GM12878 (cell line): ENCODE measurements at regions of chr1 and their contacts with region 1.

Region 1: GRCh38 chr1:182781841-182782586 is 7.6 kb upstream of the NPL start:
- DNase-seq: peak; percentile 51
- ATAC-seq: peak; percentile 88
- H3K4me3 ChIP-seq: no peak overlapping the region
- H3K27ac ChIP-seq: no peak overlapping the region
- H3K4me1 ChIP-seq: peaks cover 5% of the 10 kb centered on the region; the same call in 1 of the 2 replicates
- H3K27me3 ChIP-seq: no peaks in the 10 kb centered on the region
- CTCF ChIP-seq: peak; percentile 83 to 95 (median 89)
- EP300 ChIP-seq: no peak
- POLR2A ChIP-seq: no peak
- RAD21 ChIP-seq: peak; percentile 97

Region 2: DNA sequence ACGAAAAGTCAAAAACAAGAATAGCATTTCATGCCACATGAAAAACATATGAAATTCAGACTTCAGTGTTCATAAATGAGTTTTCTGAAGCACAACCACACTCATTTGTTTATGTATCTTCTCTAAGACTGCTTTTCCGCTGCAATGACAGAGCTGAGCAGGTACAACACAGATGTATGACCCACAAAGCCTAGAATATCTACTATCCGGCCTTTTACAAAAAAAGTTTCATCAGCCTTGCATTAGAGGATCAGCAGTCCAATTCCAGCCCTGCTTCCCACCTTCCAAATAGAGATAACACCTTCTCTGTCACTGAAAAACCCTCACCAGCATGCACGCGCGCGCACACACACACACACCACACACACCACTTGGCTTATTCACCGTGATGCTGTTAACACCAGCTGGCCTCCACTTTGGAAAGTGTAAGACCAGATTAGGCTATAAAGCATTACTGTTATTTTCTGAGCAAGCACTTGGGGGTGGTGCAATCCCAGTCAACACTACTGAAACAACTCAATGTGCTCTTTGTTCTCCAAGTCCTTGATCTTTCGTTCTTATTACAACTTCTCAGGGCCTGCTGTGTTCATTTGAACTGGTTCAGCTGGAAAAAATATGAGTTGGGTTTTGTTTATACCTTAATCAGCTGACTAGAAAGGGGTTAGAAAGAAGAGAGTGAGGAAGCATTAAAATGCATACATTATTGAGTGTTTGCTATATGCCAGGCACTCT is 480.4 kb before region 1 on chr1:
- CTCF ChIA-PET with region 1: no interaction called
- POLR2A ChIA-PET with region 1: no interaction called
- RAD21 ChIA-PET with region 1: no interaction called
- SMC1A ChIA-PET with region 1: no interaction called
- in situ Hi-C with region 1: no loop called
- intact Hi-C with region 1: no loop called
- DNase-seq: no peak
- ATAC-seq: peak; percentile 66
- H3K4me3 ChIP-seq: no peak overlapping the region
- H3K27ac ChIP-seq: no peak overlapping the region
- H3K4me1 ChIP-seq: peaks cover 12% of the 10 kb centered on the region
- H3K27me3 ChIP-seq: no peaks in the 10 kb centered on the region
- CTCF ChIP-seq: peak in 1 of 3 experiments; percentile 30; a peak in 1 of 6 replicates
- EP300 ChIP-seq: no peak
- POLR2A ChIP-seq: no peak
- RAD21 ChIP-seq: peak; percentile 45; the same call in 1 of the 2 replicates

Region 3: DNA sequence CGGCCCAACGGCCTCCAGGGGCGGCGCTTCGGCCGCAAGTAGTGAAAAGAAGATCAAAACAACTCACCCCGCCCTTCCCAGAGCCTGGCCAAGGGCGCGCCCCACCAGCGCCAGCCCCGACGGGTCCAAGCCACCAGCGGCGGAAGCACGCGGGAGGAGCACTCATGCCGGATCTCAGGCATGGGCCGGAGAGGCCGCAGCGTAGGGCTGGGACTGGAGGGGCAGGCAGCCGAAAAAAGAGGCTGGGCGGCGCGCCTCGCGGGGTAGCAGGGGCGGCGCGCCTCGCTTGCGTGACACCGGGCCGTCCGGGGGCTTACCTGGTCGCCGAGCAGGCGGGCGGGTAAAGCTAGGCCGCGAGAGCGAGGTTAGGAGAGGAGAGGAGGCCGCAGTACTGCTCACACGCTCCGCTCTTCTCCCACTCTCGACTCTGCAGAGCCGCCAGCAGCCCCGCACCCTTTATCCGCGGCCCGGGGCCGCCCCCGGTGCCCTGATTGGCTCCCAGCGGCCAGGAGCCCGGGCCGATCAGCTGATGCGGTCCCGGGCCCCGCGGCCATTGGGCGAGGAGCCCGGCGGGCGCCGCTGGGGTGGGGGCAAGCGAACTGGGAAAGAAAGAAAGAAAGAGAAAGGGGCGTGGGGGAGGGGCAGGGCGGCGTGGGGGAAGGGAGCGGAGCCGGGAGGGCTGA is 390.5 kb before region 1 on chr1 and contains the start of gene GLUL:
- CTCF ChIA-PET with region 1: interaction called, 17 read pairs
- POLR2A ChIA-PET with region 1: no interaction called
- RAD21 ChIA-PET with region 1: no interaction called
- SMC1A ChIA-PET with region 1: interaction called, 7 read pairs
- in situ Hi-C with region 1: no loop called
- intact Hi-C with region 1: loop called (anchors 5 kb)
- DNase-seq: no peak
- ATAC-seq: peak; percentile 86
- H3K4me3 ChIP-seq: peak within 1 kb of the TSS; percentile 85
- H3K27ac ChIP-seq: peak within 1 kb of the TSS; percentile 71
- H3K4me1 ChIP-seq: peaks cover 11% of the 10 kb centered on the region
- H3K27me3 ChIP-seq: no peaks in the 10 kb centered on the region
- CTCF ChIP-seq: peak in 1 of 3 experiments; percentile 36; a peak in 1 of 6 replicates
- EP300 ChIP-seq: no peak
- POLR2A ChIP-seq: peak; percentile 98
- RAD21 ChIP-seq: no peak
- polyA plus RNA-seq, gene GLUL: 166 to 392 TPM

Region 4: DNA sequence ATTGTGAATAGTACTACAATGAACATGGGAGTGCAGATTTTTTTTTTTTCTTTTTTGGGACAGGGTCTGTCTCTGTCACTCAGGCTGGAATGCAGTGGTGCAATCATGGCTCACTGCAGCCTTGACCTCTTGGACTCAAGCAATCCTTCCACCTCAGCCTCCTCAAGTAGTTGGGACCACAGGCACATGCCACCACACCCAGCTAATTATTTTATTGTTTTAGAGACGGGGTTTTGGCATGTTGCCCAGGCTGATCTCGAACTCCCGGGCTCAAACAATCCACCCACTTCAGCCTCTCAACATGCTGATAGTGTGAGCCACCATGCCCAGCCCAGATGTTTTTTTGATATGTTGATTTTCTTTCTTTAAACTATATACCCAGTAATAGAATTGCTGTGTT is 274.3 kb before region 1 on chr1:
- CTCF ChIA-PET with region 1: no interaction called
- POLR2A ChIA-PET with region 1: no interaction called
- RAD21 ChIA-PET with region 1: no interaction called
- SMC1A ChIA-PET with region 1: no interaction called
- in situ Hi-C with region 1: no loop called
- intact Hi-C with region 1: no loop called
- DNase-seq: no peak
- ATAC-seq: no peak
- H3K4me3 ChIP-seq: no peak overlapping the region
- H3K27ac ChIP-seq: no peak overlapping the region
- H3K4me1 ChIP-seq: no peaks in the 10 kb centered on the region
- H3K27me3 ChIP-seq: no peaks in the 10 kb centered on the region
- CTCF ChIP-seq: no peak
- EP300 ChIP-seq: no peak
- POLR2A ChIP-seq: no peak
- RAD21 ChIP-seq: no peak

Region 5: GRCh38 chr1:182527680-182528079 is 254.3 kb before region 1 on chr1:
- CTCF ChIA-PET with region 1: no interaction called
- POLR2A ChIA-PET with region 1: no interaction called
- RAD21 ChIA-PET with region 1: no interaction called
- SMC1A ChIA-PET with region 1: no interaction called
- in situ Hi-C with region 1: no loop called
- intact Hi-C with region 1: no loop called
- DNase-seq: no peak
- ATAC-seq: no peak
- H3K4me3 ChIP-seq: no peak overlapping the region
- H3K27ac ChIP-seq: no peak overlapping the region
- H3K4me1 ChIP-seq: no peaks in the 10 kb centered on the region
- H3K27me3 ChIP-seq: no peaks in the 10 kb centered on the region
- CTCF ChIP-seq: no peak
- EP300 ChIP-seq: no peak
- POLR2A ChIP-seq: no peak
- RAD21 ChIP-seq: no peak

Region 6: DNA sequence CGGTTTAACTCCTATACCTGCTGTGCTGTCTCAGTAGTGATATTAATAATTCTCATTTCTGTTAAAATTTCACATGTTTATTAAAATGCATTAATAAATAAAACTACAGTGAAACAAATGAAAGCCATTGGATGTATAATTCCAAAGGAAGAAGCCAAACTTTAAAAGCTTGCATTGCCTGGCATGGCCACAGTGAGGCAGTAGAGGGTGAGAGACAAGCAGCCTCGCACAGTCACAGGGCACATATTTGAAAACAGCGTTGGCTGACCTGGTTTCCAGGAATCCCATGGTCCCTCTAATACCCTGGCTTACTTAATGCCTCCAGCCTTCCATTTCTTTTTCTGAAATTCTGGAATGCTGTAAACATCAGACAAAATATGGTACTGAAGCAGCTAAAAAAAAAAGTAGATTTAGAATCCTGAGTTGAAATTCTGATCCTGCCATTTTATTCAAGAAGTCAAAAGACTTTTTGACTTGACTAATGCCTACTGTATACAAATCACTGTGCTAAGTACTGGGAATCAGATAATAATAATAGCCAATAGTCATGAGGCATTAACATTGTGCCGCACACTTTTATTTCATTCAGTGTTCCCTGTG is 186.3 kb before region 1 on chr1:
- CTCF ChIA-PET with region 1: interaction called, 1,888 read pairs
- POLR2A ChIA-PET with region 1: interaction called, 34 read pairs
- RAD21 ChIA-PET with region 1: interaction called, 946 read pairs
- SMC1A ChIA-PET with region 1: interaction called, 1,145 read pairs
- in situ Hi-C with region 1: loop called (anchors 5 kb)
- intact Hi-C with region 1: loop called (anchors 1 kb)
- DNase-seq: no peak
- ATAC-seq: peak; percentile 56
- H3K4me3 ChIP-seq: no peak overlapping the region
- H3K27ac ChIP-seq: no peak overlapping the region
- H3K4me1 ChIP-seq: peaks cover 4% of the 10 kb centered on the region; the same call in 1 of the 2 replicates
- H3K27me3 ChIP-seq: no peaks in the 10 kb centered on the region
- CTCF ChIP-seq: peak; percentile 87 to 91 (median 88)
- EP300 ChIP-seq: no peak
- POLR2A ChIP-seq: no peak
- RAD21 ChIP-seq: peak; percentile 92

Region 7: GRCh38 chr1:182629499-182630096 is 152.4 kb before region 1 on chr1:
- CTCF ChIA-PET with region 1: interaction called, 14 read pairs
- POLR2A ChIA-PET with region 1: no interaction called
- RAD21 ChIA-PET with region 1: interaction called, 31 read pairs
- SMC1A ChIA-PET with region 1: interaction called, 30 read pairs
- in situ Hi-C with region 1: no loop called
- intact Hi-C with region 1: no loop called
- DNase-seq: no peak
- ATAC-seq: peak; percentile 88
- H3K4me3 ChIP-seq: no peak overlapping the region
- H3K27ac ChIP-seq: no peak overlapping the region
- H3K4me1 ChIP-seq: peaks cover 52% of the 10 kb centered on the region
- H3K27me3 ChIP-seq: no peaks in the 10 kb centered on the region
- CTCF ChIP-seq: no peak
- EP300 ChIP-seq: peak; percentile 26 to 61; a peak in 2 of 4 replicates
- POLR2A ChIP-seq: no peak
- RAD21 ChIP-seq: no peak

Region 8: DNA sequence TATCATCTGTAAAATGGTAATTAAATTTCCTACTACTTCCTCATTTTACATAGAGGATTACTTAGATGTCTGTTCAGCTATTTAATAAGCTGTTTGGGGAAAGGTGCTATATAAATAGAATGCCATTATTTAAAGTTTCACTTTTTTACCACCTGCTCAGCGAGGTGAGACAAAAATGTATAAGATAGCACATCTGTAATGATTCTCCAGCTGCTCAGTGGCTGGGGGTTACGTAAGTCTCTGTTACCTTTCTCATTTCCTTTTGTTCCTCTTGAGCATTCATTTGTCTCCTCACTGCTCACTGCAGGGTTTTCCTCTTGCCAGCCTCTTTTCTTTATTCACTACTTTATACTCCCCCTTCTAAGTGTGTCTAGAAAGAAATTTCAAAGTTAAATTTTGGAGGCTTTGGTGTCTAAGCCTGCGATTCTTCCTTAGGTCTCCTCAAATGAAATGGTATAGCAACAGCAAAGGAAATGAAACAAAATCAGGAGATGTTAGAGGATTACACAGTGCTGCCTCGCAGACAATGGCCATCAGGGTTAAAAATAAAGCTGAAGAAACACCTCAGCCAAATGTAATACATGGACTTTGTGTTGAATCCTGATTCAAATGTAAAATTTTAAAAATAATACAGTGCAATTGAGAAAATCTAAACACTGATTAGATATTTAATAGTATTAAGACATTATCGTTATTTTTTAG is 104.5 kb before region 1 on chr1:
- CTCF ChIA-PET with region 1: interaction called, 39 read pairs
- POLR2A ChIA-PET with region 1: no interaction called
- RAD21 ChIA-PET with region 1: interaction called, 31 read pairs
- SMC1A ChIA-PET with region 1: interaction called, 58 read pairs
- in situ Hi-C with region 1: no loop called
- intact Hi-C with region 1: loop called (anchors 5 kb)
- DNase-seq: peak; percentile 61
- ATAC-seq: peak; percentile 93
- H3K4me3 ChIP-seq: no peak overlapping the region
- H3K27ac ChIP-seq: no peak overlapping the region
- H3K4me1 ChIP-seq: peaks cover 36% of the 10 kb centered on the region; the same call in 1 of the 2 replicates
- H3K27me3 ChIP-seq: no peaks in the 10 kb centered on the region
- CTCF ChIP-seq: no peak
- EP300 ChIP-seq: peak; percentile 78 to 79; a peak in 3 of 4 replicates
- POLR2A ChIP-seq: no peak
- RAD21 ChIP-seq: no peak

Region 9: GRCh38 chr1:182761396-182762395 is 20.3 kb before region 1 on chr1:
- CTCF ChIA-PET with region 1: interaction called, 30 read pairs
- POLR2A ChIA-PET with region 1: no interaction called
- RAD21 ChIA-PET with region 1: interaction called, 24 read pairs
- SMC1A ChIA-PET with region 1: interaction called, 6 read pairs
- in situ Hi-C with region 1: no loop called
- intact Hi-C with region 1: no loop called
- DNase-seq: no peak
- ATAC-seq: peak; percentile 63
- H3K4me3 ChIP-seq: no peak overlapping the region
- H3K27ac ChIP-seq: peak overlapping the region; percentile 42
- H3K4me1 ChIP-seq: peaks cover 4% of the 10 kb centered on the region; the same call in 1 of the 2 replicates
- H3K27me3 ChIP-seq: no peaks in the 10 kb centered on the region
- CTCF ChIP-seq: no peak
- EP300 ChIP-seq: no peak
- POLR2A ChIP-seq: no peak
- RAD21 ChIP-seq: no peak

Region 10: DNA sequence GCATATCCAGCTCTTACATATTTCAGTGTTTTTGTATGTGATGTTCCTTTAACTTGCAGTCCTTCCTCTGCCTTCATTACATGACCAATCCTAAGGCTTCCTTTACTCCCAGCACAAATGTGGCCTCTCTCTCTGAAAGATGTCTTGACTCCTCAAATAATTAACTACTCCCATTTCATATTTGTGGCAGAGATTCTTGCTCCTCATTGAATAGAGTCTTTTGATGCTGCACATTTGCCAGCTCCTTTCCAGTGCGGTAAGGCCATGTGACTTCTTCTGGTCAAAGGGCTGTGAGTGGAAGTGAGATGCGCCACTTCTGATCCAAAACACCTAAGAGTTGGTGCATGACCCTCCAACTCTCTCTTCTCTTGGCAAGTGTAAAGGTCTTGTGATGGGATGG is 222.1 kb after region 1 on chr1:
- CTCF ChIA-PET with region 1: no interaction called
- POLR2A ChIA-PET with region 1: no interaction called
- RAD21 ChIA-PET with region 1: no interaction called
- SMC1A ChIA-PET with region 1: no interaction called
- in situ Hi-C with region 1: no loop called
- intact Hi-C with region 1: no loop called
- DNase-seq: no peak
- ATAC-seq: no peak
- H3K4me3 ChIP-seq: no peak overlapping the region
- H3K27ac ChIP-seq: no peak overlapping the region
- H3K4me1 ChIP-seq: no peaks in the 10 kb centered on the region
- H3K27me3 ChIP-seq: no peaks in the 10 kb centered on the region
- CTCF ChIP-seq: no peak
- EP300 ChIP-seq: no peak
- POLR2A ChIP-seq: no peak
- RAD21 ChIP-seq: no peak